ENCODE measurements at regions of chr4 and their contacts with region 1.

Region 1: DNA sequence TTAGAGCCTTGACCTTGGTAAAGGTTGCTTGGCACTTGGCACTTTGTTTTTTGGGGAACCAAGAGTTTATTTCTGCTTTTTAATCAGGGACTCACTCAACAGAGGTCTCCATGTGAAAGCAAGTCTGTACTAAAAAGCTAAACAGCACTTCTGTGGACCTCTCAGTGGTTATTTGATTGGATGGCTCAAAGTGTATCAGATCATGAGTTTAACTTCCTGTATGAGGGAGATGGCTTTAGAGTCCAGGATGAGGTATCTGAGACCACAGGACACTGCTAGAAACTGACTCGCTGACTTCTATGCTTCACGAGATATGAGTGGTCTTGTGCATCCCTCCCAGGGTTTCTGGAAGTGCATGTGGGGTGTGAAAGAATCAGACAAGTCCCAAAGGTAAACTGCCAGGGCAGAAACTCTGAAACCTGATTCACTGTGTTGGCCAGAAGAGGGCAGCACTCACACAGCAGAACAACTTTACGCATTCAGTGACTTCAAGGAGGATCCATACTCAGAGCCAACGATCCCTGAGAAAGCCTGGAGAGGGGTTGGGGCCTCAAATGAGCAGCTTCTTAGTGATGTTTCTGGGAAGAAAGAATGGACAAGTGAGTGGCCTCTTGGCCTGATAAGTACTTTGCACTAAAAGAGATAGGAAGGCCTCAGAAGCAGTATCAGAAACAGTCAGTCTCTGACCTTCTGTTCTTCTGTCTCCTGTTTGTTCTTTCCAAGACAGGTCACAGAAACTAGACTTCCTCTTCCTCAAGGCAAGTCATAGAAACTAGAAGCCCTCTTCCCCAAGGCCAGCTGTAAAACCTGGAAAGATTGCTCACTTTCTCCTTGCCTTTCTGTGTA is 220.3 kb upstream of the CXCL13 start:
- DNase-seq: peak; percentile 20 to 53
- ATAC-seq: peak; percentile 84 to 92; a peak in 5 of 6 replicates
- H3K4me3 ChIP-seq: no peak overlapping the region
- H3K27ac ChIP-seq: no peak overlapping the region
- H3K4me1 ChIP-seq: no peaks in the 10 kb centered on the region
- CTCF ChIP-seq: peak; percentile 67
- EP300 ChIP-seq: no peak
- POLR2A ChIP-seq: no peak
- RAD21 ChIP-seq: peak; percentile 74

Region 2: GRCh38 chr4:77413766-77414165 is 28.4 kb after region 1 on chr4:
- CTCF ChIA-PET with region 1: interaction called, 12 read pairs
- POLR2A ChIA-PET with region 1: no interaction called
- DNase-seq: no peak
- ATAC-seq: no peak
- H3K4me3 ChIP-seq: no peak overlapping the region
- H3K27ac ChIP-seq: no peak overlapping the region
- H3K4me1 ChIP-seq: no peaks in the 10 kb centered on the region
- CTCF ChIP-seq: no peak
- EP300 ChIP-seq: no peak
- POLR2A ChIP-seq: no peak
- RAD21 ChIP-seq: no peak

Region 3: GRCh38 chr4:77433418-77433733 is 48.0 kb after region 1 on chr4:
- CTCF ChIA-PET with region 1: interaction called, 16 read pairs
- POLR2A ChIA-PET with region 1: no interaction called
- DNase-seq: peak; percentile 21 to 50
- ATAC-seq: peak; percentile 74 to 82; a peak in 5 of 6 replicates
- H3K4me3 ChIP-seq: no peak overlapping the region
- H3K27ac ChIP-seq: no peak overlapping the region
- H3K4me1 ChIP-seq: no peaks in the 10 kb centered on the region
- CTCF ChIP-seq: peak; percentile 50
- EP300 ChIP-seq: no peak
- POLR2A ChIP-seq: no peak
- RAD21 ChIP-seq: peak; percentile 57 to 58